CD4-positive, alpha-beta T cell (primary cell): ENCODE measurements at regions of chr6 and their contacts with region 1.

Region 1: GRCh38 chr6:32971581-32972352 is 3.4 kb downstream of the BRD2 start:
- DNase-seq: peak; percentile 99 to 100 (median 100)
- ATAC-seq: peak; percentile 53
- H3K4me3 ChIP-seq: peak overlapping the region; percentile 97
- H3K4me3 Mint-ChIP-seq: peak overlapping the region; percentile 98
- H3K27ac ChIP-seq: peak overlapping the region; percentile 91 to 98
- H3K27ac Mint-ChIP-seq: peak overlapping the region; percentile 100
- H3K4me1 ChIP-seq: peaks cover 52% of the 10 kb centered on the region
- H3K4me1 Mint-ChIP-seq: peaks cover 48% of the 10 kb centered on the region
- H3K27me3 ChIP-seq: no peaks in the 10 kb centered on the region
- H3K27me3 Mint-ChIP-seq: no peaks in the 10 kb centered on the region
- CTCF ChIP-seq: no peak

Region 2: GRCh38 chr6:32190054-32190851 is 781.5 kb before region 1 on chr6 and contains the start of gene PBX2:
- CTCF ChIA-PET with region 1: no interaction called
- POLR2A ChIA-PET with region 1: interaction called, 20 read pairs
- intact Hi-C with region 1: loop called in 1 of 2 experiments (anchors 5 kb)
- DNase-seq: peak; percentile 65 to 96 (median 86)
- ATAC-seq: peak; percentile 51
- H3K4me3 ChIP-seq: peak within 1 kb of the TSS; percentile 96
- H3K4me3 Mint-ChIP-seq: peak within 1 kb of the TSS; percentile 99
- H3K27ac ChIP-seq: peak within 1 kb of the TSS; percentile 93
- H3K27ac Mint-ChIP-seq: peak within 1 kb of the TSS; percentile 96
- H3K4me1 ChIP-seq: peaks cover 74% of the 10 kb centered on the region
- H3K4me1 Mint-ChIP-seq: peaks cover 71% of the 10 kb centered on the region
- H3K27me3 ChIP-seq: no peaks in the 10 kb centered on the region
- H3K27me3 Mint-ChIP-seq: no peaks in the 10 kb centered on the region
- CTCF ChIP-seq: no peak
- total RNA-seq, gene PBX2: 62.0 to 65.6 TPM

Region 3: DNA sequence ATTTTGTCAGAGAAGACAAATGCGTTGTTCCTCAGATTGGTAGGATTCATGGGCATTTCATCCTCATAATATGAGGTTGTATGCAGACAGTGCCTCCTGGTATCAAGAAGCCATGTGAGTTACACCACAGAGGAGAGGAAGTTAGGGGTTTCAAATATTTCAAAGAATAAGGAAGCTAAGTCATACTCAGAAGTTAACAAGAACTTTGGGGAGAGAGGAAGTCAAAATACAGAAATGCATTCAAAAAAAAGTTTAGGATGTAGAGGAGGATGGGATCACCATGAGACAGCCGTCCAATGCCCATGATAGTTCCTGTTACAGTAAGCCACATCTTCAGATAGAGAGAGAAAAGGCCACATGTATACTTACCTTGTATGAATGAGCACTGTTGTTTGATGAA is 177.3 kb before region 1 on chr6:
- CTCF ChIA-PET with region 1: no interaction called
- POLR2A ChIA-PET with region 1: no interaction called
- intact Hi-C with region 1: no loop called
- DNase-seq: peak in 3 of 14 experiments; percentile 14 to 48 (median 30)
- ATAC-seq: peak; percentile 29
- H3K4me3 ChIP-seq: no peak overlapping the region
- H3K4me3 Mint-ChIP-seq: no peak overlapping the region
- H3K27ac ChIP-seq: no peak overlapping the region
- H3K27ac Mint-ChIP-seq: no peak overlapping the region
- H3K4me1 ChIP-seq: peaks cover 9% of the 10 kb centered on the region
- H3K4me1 Mint-ChIP-seq: peaks cover 26% of the 10 kb centered on the region
- H3K27me3 ChIP-seq: peaks cover 14 to 28% of the 10 kb centered on the region in 2 experiments
- H3K27me3 Mint-ChIP-seq: peaks cover 74% of the 10 kb centered on the region
- CTCF ChIP-seq: no peak

Region 4: DNA sequence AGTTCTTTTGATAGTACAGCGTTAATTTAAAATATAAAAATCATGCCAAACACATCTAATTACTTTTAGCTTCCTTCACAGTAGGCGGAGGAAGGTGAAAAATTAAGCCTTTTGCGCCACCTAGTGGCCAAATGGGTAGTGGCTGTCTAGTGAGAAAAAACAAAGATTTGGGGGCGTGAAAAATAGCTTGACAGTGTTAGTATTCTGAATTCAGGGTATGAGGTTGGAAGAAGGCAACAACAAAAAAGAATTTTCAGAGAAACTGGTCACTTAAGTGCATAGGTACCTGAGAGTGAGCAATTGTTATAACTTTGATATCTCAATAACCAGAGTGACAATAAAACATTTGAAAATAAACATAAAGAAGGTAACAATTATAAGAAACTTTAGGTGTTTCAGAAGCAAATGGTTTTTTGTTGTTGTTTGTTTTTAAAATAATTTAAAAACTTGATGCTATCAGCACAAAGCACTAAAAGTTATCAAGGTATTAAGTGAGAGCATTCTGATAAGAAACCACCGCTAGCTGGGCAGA is 103.4 kb before region 1 on chr6:
- CTCF ChIA-PET with region 1: interaction called, 8 read pairs
- POLR2A ChIA-PET with region 1: interaction called, 34 read pairs
- intact Hi-C with region 1: no loop called
- DNase-seq: peak; percentile 76 to 94 (median 87)
- ATAC-seq: peak; percentile 81
- H3K4me3 ChIP-seq: no peak overlapping the region
- H3K4me3 Mint-ChIP-seq: no peak overlapping the region
- H3K27ac ChIP-seq: no peak overlapping the region
- H3K27ac Mint-ChIP-seq: peak overlapping the region; percentile 82
- H3K4me1 ChIP-seq: peaks cover 20% of the 10 kb centered on the region
- H3K4me1 Mint-ChIP-seq: peaks cover 35% of the 10 kb centered on the region
- H3K27me3 ChIP-seq: no peaks in the 10 kb centered on the region
- H3K27me3 Mint-ChIP-seq: no peaks in the 10 kb centered on the region
- CTCF ChIP-seq: peak; percentile 95

Region 5: GRCh38 chr6:32947552-32948465 is 24.0 kb before region 1 on chr6:
- CTCF ChIA-PET with region 1: interaction called, 177 read pairs
- POLR2A ChIA-PET with region 1: interaction called, 325 read pairs
- intact Hi-C with region 1: loop called (anchors 1 kb)
- DNase-seq: peak in 11 of 14 experiments; percentile 19 to 79 (median 32)
- ATAC-seq: peak; percentile 33
- H3K4me3 ChIP-seq: no peak overlapping the region
- H3K4me3 Mint-ChIP-seq: no peak overlapping the region
- H3K27ac ChIP-seq: no peak overlapping the region
- H3K27ac Mint-ChIP-seq: no peak overlapping the region
- H3K4me1 ChIP-seq: peaks cover 43% of the 10 kb centered on the region
- H3K4me1 Mint-ChIP-seq: peaks cover 72% of the 10 kb centered on the region
- H3K27me3 ChIP-seq: no peaks in the 10 kb centered on the region
- H3K27me3 Mint-ChIP-seq: no peaks in the 10 kb centered on the region
- CTCF ChIP-seq: peak; percentile 77

Region 6: GRCh38 chr6:33183071-33183683 is 211.4 kb after region 1 on chr6:
- CTCF ChIA-PET with region 1: no interaction called
- POLR2A ChIA-PET with region 1: interaction called, 11 read pairs
- intact Hi-C with region 1: no loop called
- DNase-seq: peak in 2 of 14 experiments; percentile 18 to 59
- ATAC-seq: peak; percentile 63
- H3K4me3 ChIP-seq: no peak overlapping the region
- H3K4me3 Mint-ChIP-seq: peak overlapping the region; percentile 68
- H3K27ac ChIP-seq: no peak overlapping the region
- H3K27ac Mint-ChIP-seq: peak overlapping the region; percentile 83
- H3K4me1 ChIP-seq: peaks cover 24% of the 10 kb centered on the region
- H3K4me1 Mint-ChIP-seq: peaks cover 25% of the 10 kb centered on the region
- H3K27me3 ChIP-seq: no peaks in the 10 kb centered on the region
- H3K27me3 Mint-ChIP-seq: peaks cover 20% of the 10 kb centered on the region
- CTCF ChIP-seq: no peak

Region 7: DNA sequence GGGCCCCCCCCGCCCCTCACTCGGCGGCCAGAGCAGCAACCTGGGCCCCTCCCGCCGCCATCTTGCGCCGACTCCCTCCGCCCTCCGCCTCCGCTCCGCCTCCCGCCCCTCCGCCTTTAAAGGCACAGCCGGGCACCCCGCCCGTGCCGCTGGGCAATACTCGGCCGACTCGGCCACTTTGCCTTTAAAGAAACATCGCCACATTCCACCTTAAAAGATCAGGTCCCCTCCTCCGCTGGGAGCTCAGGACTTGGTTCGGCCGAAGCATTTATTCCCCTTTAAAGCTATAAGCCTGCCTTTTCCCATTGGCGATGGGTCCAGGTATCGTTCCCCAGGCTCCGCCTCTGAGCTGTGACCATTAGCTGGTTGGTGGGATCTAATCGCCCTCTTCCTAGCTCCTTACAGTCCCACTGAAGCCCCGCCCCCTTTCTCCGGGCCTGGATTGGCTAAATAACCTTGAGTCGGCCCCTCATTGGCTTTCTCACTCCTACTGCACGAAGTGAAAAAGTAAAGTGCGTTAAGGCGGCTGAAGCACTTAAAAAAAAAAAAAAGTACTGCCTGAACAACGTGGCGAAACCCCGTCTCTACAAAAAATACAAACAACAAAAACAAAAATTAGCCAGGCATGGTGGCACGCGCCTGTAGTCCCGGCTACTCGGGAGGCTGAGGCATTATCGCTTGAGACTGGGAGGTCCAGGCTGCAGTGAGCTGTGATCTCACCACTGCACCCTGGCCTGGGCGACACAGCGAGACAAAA is 346.1 kb after region 1 on chr6 and contains the start of gene ZBTB22:
- CTCF ChIA-PET with region 1: no interaction called
- POLR2A ChIA-PET with region 1: interaction called, 15 read pairs
- intact Hi-C with region 1: no loop called
- DNase-seq: peak; percentile 90 to 98 (median 95)
- ATAC-seq: peak; percentile 64
- H3K4me3 ChIP-seq: peak within 1 kb of the TSS; percentile 67
- H3K4me3 Mint-ChIP-seq: peak within 1 kb of the TSS; percentile 100
- H3K27ac ChIP-seq: peak within 1 kb of the TSS; percentile 81 to 86
- H3K27ac Mint-ChIP-seq: peak within 1 kb of the TSS; percentile 94
- H3K4me1 ChIP-seq: peaks cover 75% of the 10 kb centered on the region
- H3K4me1 Mint-ChIP-seq: peaks cover 95% of the 10 kb centered on the region
- H3K27me3 ChIP-seq: no peaks in the 10 kb centered on the region
- H3K27me3 Mint-ChIP-seq: no peaks in the 10 kb centered on the region
- CTCF ChIP-seq: no peak
- total RNA-seq, gene ZBTB22: 11.6 to 13.6 TPM